ENCODE measurements at regions of chr1 and their contacts with region 1.

Region 1: DNA sequence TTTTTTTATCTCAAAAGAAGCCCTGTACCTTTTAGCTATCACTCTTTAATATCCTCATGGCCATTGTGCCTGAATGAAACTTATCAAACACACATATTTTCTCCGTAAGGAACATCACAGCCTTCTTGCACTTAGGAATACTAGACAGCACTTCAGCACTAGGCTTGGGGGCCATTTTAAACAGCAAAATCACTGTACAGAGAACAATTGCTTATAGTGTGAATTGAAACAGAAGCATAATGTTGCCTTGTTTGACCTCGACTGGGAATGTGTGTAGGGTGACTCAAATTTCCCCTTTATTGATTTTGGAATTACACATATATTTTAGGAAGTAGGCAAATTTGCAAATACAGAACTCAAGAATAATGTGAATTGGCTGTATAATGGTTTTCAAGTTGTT is 36.4 kb downstream of the KYAT3 start:
- DNase-seq: no peak
- H3K27ac ChIP-seq: no peak overlapping the region
- CTCF ChIP-seq: no peak

Region 2: GRCh38 chr1:88394958-88395357 is 561.0 kb before region 1 on chr1:
- CTCF ChIA-PET with region 1: no interaction called
- POLR2A ChIA-PET with region 1: no interaction called
- DNase-seq: no peak
- H3K27ac ChIP-seq: no peak overlapping the region
- CTCF ChIP-seq: no peak

Region 3: DNA sequence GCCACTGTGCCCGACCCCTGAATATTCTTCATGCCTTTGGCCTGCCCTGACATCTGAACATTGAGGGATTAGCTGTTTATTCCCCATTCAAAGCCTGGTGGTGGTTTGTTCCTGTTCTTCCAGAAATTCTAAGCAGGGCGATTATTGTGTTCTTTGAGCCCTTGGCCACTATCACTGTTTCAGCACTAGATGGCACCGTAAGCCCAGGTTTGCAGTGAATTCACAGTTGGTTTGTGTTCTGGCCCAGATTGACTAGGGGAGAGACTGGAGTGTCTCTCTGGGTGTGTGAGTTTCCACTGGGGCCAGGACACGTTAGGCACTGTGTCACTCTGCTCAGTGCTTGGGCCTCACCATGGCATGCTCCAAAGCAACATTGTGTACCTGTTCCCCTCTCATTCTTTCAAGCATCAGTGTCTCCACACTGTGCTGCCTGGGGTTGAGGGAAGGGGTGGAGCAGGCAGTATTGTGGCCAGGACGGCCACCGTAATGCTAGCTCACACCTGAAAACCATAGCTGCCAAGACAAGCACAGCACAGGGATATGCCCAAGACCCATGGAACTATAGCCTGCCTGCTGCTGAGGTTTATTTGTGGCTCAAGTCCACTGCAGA is 219.3 kb before region 1 on chr1:
- CTCF ChIA-PET with region 1: no interaction called
- POLR2A ChIA-PET with region 1: no interaction called
- DNase-seq: peak; percentile 24
- H3K27ac ChIP-seq: no peak overlapping the region
- CTCF ChIP-seq: no peak; the same call in 1 of the 2 replicates

Region 4: GRCh38 chr1:88936223-88936523 is 19.8 kb before region 1 on chr1:
- CTCF ChIA-PET with region 1: no interaction called
- POLR2A ChIA-PET with region 1: interaction called, 12 read pairs
- DNase-seq: no peak
- H3K27ac ChIP-seq: no peak overlapping the region
- CTCF ChIP-seq: peak; percentile 48

Region 5: GRCh38 chr1:88998716-88999115 is 42.7 kb after region 1 on chr1:
- CTCF ChIA-PET with region 1: no interaction called
- POLR2A ChIA-PET with region 1: no interaction called
- DNase-seq: no peak
- H3K27ac ChIP-seq: no peak overlapping the region
- CTCF ChIP-seq: peak; percentile 37

Measured in RWPE1 (cell line).